ENCODE measurements at regions of chr1 and their contacts with region 1.

Region 1: GRCh38 chr1:151790071-151790940 is at the start of gene TDRKH:
- DNase-seq: peak; percentile 95 to 99 (median 97)
- ATAC-seq: peak; percentile 95
- H3K4me3 ChIP-seq: peak within 1 kb of the TSS; percentile 94
- H3K4me3 Mint-ChIP-seq: peak within 1 kb of the TSS; percentile 94
- H3K27ac ChIP-seq: peak within 1 kb of the TSS in 1 of 2 donors; percentile 69
- H3K27ac Mint-ChIP-seq: peak within 1 kb of the TSS; percentile 63
- H3K4me1 ChIP-seq: peaks cover 21% of the 10 kb centered on the region
- H3K4me1 Mint-ChIP-seq: peaks cover 26% of the 10 kb centered on the region
- H3K27me3 ChIP-seq: no peaks in the 10 kb centered on the region
- H3K27me3 Mint-ChIP-seq: no peaks in the 10 kb centered on the region
- CTCF ChIP-seq: no peak
- total RNA-seq, gene TDRKH: 6.1 to 6.4 TPM

Region 2: GRCh38 chr1:151739590-151740375 is 50.5 kb before region 1 on chr1:
- CTCF ChIA-PET with region 1: no interaction called
- POLR2A ChIA-PET with region 1: no interaction called
- intact Hi-C with region 1: no loop called
- DNase-seq: no peak
- ATAC-seq: no peak
- H3K4me3 ChIP-seq: no peak overlapping the region
- H3K4me3 Mint-ChIP-seq: no peak overlapping the region
- H3K27ac ChIP-seq: no peak overlapping the region
- H3K27ac Mint-ChIP-seq: no peak overlapping the region
- H3K4me1 ChIP-seq: no peaks in the 10 kb centered on the region
- H3K4me1 Mint-ChIP-seq: no peaks in the 10 kb centered on the region
- H3K27me3 ChIP-seq: no peaks in the 10 kb centered on the region
- H3K27me3 Mint-ChIP-seq: peaks cover 4% of the 10 kb centered on the region
- CTCF ChIP-seq: no peak

Region 3: GRCh38 chr1:151762941-151763921 is 27.1 kb before region 1 on chr1 and contains the start of gene MRPL9:
- CTCF ChIA-PET with region 1: interaction called, 6 read pairs
- POLR2A ChIA-PET with region 1: interaction called, 44 read pairs
- intact Hi-C with region 1: loop called (anchors 1 kb)
- DNase-seq: peak; percentile 71 to 89 (median 83)
- ATAC-seq: peak; percentile 99
- H3K4me3 ChIP-seq: peak within 1 kb of the TSS; percentile 94
- H3K4me3 Mint-ChIP-seq: peak within 1 kb of the TSS; percentile 94
- H3K27ac ChIP-seq: peak within 1 kb of the TSS; percentile 75 to 86
- H3K27ac Mint-ChIP-seq: peak within 1 kb of the TSS; percentile 98
- H3K4me1 ChIP-seq: peaks cover 14% of the 10 kb centered on the region
- H3K4me1 Mint-ChIP-seq: peaks cover 29% of the 10 kb centered on the region
- H3K27me3 ChIP-seq: no peaks in the 10 kb centered on the region
- H3K27me3 Mint-ChIP-seq: no peaks in the 10 kb centered on the region
- CTCF ChIP-seq: no peak
- total RNA-seq, gene MRPL9: 152 to 164 TPM

Region 4: GRCh38 chr1:151815716-151816327 is 25.5 kb after region 1 on chr1:
- CTCF ChIA-PET with region 1: interaction called, 3 read pairs
- POLR2A ChIA-PET with region 1: interaction called, 23 read pairs
- intact Hi-C with region 1: no loop called
- DNase-seq: peak in 11 of 14 experiments; percentile 25 to 87 (median 49)
- ATAC-seq: peak; percentile 86
- H3K4me3 ChIP-seq: no peak overlapping the region
- H3K4me3 Mint-ChIP-seq: peak overlapping the region; percentile 34
- H3K27ac ChIP-seq: peak overlapping the region in 1 of 2 donors; percentile 23
- H3K27ac Mint-ChIP-seq: peak overlapping the region; percentile 81
- H3K4me1 ChIP-seq: peaks cover 87% of the 10 kb centered on the region
- H3K4me1 Mint-ChIP-seq: peaks cover 68% of the 10 kb centered on the region
- H3K27me3 ChIP-seq: no peaks in the 10 kb centered on the region
- H3K27me3 Mint-ChIP-seq: no peaks in the 10 kb centered on the region
- CTCF ChIP-seq: no peak

Region 5: DNA sequence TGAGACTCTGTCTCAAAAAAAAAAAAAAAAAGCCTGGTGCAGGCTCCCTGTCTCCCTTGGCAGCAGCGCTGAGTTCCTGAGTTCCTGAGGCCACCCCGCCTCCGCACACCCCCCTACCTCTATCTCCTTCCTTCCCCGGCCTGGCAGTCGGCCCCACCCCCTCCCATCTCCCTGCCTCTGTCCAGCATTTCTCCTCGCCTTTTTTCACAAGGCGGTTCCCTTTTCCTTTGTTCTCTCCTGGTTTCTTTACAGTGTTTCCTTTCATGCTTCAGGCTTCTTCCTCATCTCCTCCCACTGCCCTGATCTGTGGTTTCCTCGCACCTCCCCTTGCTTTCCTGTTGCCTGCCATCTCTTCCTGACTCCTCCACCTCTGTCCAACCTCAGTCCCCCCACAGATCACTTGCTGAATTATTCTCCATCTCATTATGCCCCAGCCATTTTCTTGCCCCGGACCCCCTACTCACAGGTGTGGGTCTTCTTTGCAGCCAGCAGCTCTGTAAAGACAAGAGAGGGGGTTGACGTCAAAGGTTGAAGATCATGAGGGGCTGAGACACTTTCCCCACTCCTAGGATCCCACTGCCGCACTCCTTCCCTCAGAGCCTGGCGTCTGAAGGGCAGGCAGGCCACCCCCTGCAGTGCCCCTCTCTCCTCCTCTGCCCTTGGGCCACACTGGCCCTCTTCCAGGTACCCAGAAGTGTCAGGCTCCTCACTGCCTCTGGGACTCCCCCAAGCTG is 38.8 kb after region 1 on chr1:
- CTCF ChIA-PET with region 1: interaction called, 4 read pairs
- POLR2A ChIA-PET with region 1: interaction called, 6 read pairs
- intact Hi-C with region 1: loop called in 1 of 2 experiments (anchors 2 kb)
- DNase-seq: peak in 1 of 14 experiments; percentile 37
- ATAC-seq: no peak
- H3K4me3 ChIP-seq: no peak overlapping the region
- H3K4me3 Mint-ChIP-seq: peak overlapping the region; percentile 59
- H3K27ac ChIP-seq: peak overlapping the region; percentile 25 to 42
- H3K27ac Mint-ChIP-seq: peak overlapping the region; percentile 79
- H3K4me1 ChIP-seq: peaks cover 99% of the 10 kb centered on the region
- H3K4me1 Mint-ChIP-seq: peaks cover 88% of the 10 kb centered on the region
- H3K27me3 ChIP-seq: no peaks in the 10 kb centered on the region
- H3K27me3 Mint-ChIP-seq: no peaks in the 10 kb centered on the region
- CTCF ChIP-seq: no peak

Measured in CD4-positive, alpha-beta T cell (primary cell).